ENCODE measurements at regions of chr17 and their contacts with region 1.

Region 1: GRCh38 chr17:29760761-29761696 is 138.3 kb upstream of the CORO6 start:
- DNase-seq: peak; percentile 86 to 95 (median 93)
- ATAC-seq: peak; percentile 94
- H3K4me3 ChIP-seq: peak overlapping the region; percentile 89
- H3K4me3 Mint-ChIP-seq: peak overlapping the region; percentile 90 to 100 (median 98)
- H3K27ac ChIP-seq: peak overlapping the region; percentile 82
- H3K27ac Mint-ChIP-seq: peak overlapping the region; percentile 90 to 98 (median 96)
- H3K4me1 ChIP-seq: peaks cover 25 to 29% of the 10 kb centered on the region in 2 donors
- H3K4me1 Mint-ChIP-seq: peaks cover 16 to 53% (median 37%) of the 10 kb centered on the region in 7 donors
- H3K27me3 ChIP-seq: no peaks in the 10 kb centered on the region
- H3K27me3 Mint-ChIP-seq: no peaks in the 10 kb centered on the region

Region 2: GRCh38 chr17:29568331-29569244 is 192.4 kb before region 1 on chr17 and contains the start of gene TP53I13:
- CTCF ChIA-PET with region 1: interaction called, 3 read pairs
- POLR2A ChIA-PET with region 1: no interaction called
- intact Hi-C with region 1: loop called (anchors 1 to 2 kb)
- DNase-seq: peak; percentile 65 to 90 (median 81)
- ATAC-seq: peak; percentile 81
- H3K4me3 ChIP-seq: peak within 1 kb of the TSS; percentile 89
- H3K4me3 Mint-ChIP-seq: peak within 1 kb of the TSS; percentile 88 to 99 (median 95)
- H3K27ac ChIP-seq: peak within 1 kb of the TSS; percentile 78
- H3K27ac Mint-ChIP-seq: peak within 1 kb of the TSS; percentile 82 to 97 (median 92)
- H3K4me1 ChIP-seq: peaks cover 12 to 30% of the 10 kb centered on the region in 2 donors
- H3K4me1 Mint-ChIP-seq: peaks cover 21 to 42% (median 32%) of the 10 kb centered on the region in 7 donors
- H3K27me3 ChIP-seq: no peaks in the 10 kb centered on the region
- H3K27me3 Mint-ChIP-seq: no peaks in the 10 kb centered on the region
- total RNA-seq, gene TP53I13: 61.6 to 87.5 (median 62.8) TPM

Region 3: GRCh38 chr17:29617125-29617480 is 143.9 kb before region 1 on chr17:
- CTCF ChIA-PET with region 1: interaction called, 10 read pairs
- POLR2A ChIA-PET with region 1: interaction called, 9 read pairs
- intact Hi-C with region 1: loop called (anchors 1 kb)
- DNase-seq: peak; percentile 77 to 91 (median 88)
- ATAC-seq: peak; percentile 80
- H3K4me3 ChIP-seq: peak overlapping the region; percentile 80
- H3K4me3 Mint-ChIP-seq: peak overlapping the region; percentile 78 to 93 (median 88)
- H3K27ac ChIP-seq: peak overlapping the region; percentile 38
- H3K27ac Mint-ChIP-seq: peak overlapping the region in 7 of 9 donors; percentile 2 to 91 (median 72)
- H3K4me1 ChIP-seq: peaks cover 36 to 42% of the 10 kb centered on the region in 2 donors
- H3K4me1 Mint-ChIP-seq: peaks cover 13 to 55% (median 38%) of the 10 kb centered on the region in 7 donors
- H3K27me3 ChIP-seq: no peaks in the 10 kb centered on the region
- H3K27me3 Mint-ChIP-seq: peaks cover 0 to 21% (median 0%) of the 10 kb centered on the region in 5 donors

Region 4: DNA sequence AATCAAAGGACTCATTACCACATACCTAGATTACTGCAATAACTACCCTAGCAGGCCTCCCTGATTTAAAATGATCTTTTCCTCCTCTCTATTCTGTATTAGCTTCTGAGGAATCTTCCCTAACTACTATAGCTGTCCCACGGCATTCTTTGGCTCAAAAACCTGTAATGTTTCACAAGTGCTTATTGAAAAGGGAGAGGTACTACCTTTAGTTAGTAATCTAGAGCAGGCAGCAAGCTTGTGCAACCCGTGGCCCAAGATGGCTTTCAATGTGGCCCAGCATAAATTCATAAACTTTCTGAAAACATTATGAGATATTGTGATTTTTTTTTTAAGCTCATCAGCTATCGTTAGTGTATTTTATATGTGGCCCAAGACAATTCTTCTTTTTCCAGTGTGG is 67.3 kb before region 1 on chr17:
- CTCF ChIA-PET with region 1: interaction called, 3 read pairs
- POLR2A ChIA-PET with region 1: interaction called, 13 read pairs
- intact Hi-C with region 1: no loop called
- DNase-seq: no peak
- ATAC-seq: no peak
- H3K4me3 ChIP-seq: no peak overlapping the region
- H3K4me3 Mint-ChIP-seq: no peak overlapping the region
- H3K27ac ChIP-seq: no peak overlapping the region
- H3K27ac Mint-ChIP-seq: peak overlapping the region in 7 of 9 donors; percentile 20 to 72 (median 57)
- H3K4me1 ChIP-seq: peaks cover 0 to 8% of the 10 kb centered on the region in 2 donors
- H3K4me1 Mint-ChIP-seq: peaks cover 13 to 58% (median 28%) of the 10 kb centered on the region in 7 donors
- H3K27me3 ChIP-seq: no peaks in the 10 kb centered on the region
- H3K27me3 Mint-ChIP-seq: no peaks in the 10 kb centered on the region

Region 5: GRCh38 chr17:29710891-29711418 is 50.1 kb before region 1 on chr17:
- CTCF ChIA-PET with region 1: no interaction called
- POLR2A ChIA-PET with region 1: interaction called, 57 read pairs
- intact Hi-C with region 1: loop called in 1 of 2 experiments (anchors 1 kb)
- DNase-seq: no peak
- ATAC-seq: no peak
- H3K4me3 ChIP-seq: no peak overlapping the region
- H3K4me3 Mint-ChIP-seq: peak overlapping the region in 1 of 10 donors; percentile 24
- H3K27ac ChIP-seq: no peak overlapping the region
- H3K27ac Mint-ChIP-seq: peak overlapping the region in 8 of 9 donors; percentile 69 to 96 (median 86)
- H3K4me1 ChIP-seq: peaks cover 29 to 30% of the 10 kb centered on the region in 2 donors
- H3K4me1 Mint-ChIP-seq: peaks cover 37 to 92% (median 75%) of the 10 kb centered on the region in 7 donors
- H3K27me3 ChIP-seq: no peaks in the 10 kb centered on the region
- H3K27me3 Mint-ChIP-seq: no peaks in the 10 kb centered on the region

Region 6: DNA sequence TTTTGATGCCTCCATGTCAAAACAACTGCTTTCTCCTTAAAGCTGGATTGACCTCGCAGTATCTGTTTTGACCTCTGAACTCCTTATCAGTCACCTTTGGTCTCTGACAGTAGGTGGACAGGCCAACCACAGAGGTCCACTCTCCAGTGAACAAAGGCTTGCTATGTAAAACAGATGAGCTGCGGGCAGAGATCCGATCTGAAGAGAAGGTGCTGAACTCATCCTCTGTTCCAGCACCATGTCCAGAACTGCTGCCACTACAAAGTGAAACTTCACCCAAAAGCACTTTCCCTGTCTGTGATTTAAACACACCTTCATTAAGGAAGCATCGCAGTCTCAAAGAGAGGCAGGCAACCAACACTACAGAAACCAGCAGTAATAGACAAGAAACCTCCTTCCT is 21.0 kb before region 1 on chr17:
- CTCF ChIA-PET with region 1: no interaction called
- POLR2A ChIA-PET with region 1: interaction called, 11 read pairs
- intact Hi-C with region 1: loop called (anchors 1 to 2 kb)
- DNase-seq: peak in 4 of 9 donors; percentile 18 to 28 (median 20)
- ATAC-seq: no peak
- H3K4me3 ChIP-seq: no peak overlapping the region
- H3K4me3 Mint-ChIP-seq: peak overlapping the region in 7 of 10 donors; percentile 8 to 68 (median 56)
- H3K27ac ChIP-seq: peak overlapping the region; percentile 33
- H3K27ac Mint-ChIP-seq: peak overlapping the region in 8 of 9 donors; percentile 55 to 91 (median 70)
- H3K4me1 ChIP-seq: peaks cover 12 to 34% of the 10 kb centered on the region in 2 donors
- H3K4me1 Mint-ChIP-seq: peaks cover 31 to 76% (median 58%) of the 10 kb centered on the region in 7 donors
- H3K27me3 ChIP-seq: no peaks in the 10 kb centered on the region
- H3K27me3 Mint-ChIP-seq: no peaks in the 10 kb centered on the region

Region 7: GRCh38 chr17:29777663-29778062 is 16.6 kb after region 1 on chr17:
- CTCF ChIA-PET with region 1: interaction called, 6 read pairs
- POLR2A ChIA-PET with region 1: interaction called, 9 read pairs
- intact Hi-C with region 1: loop called (anchors 1 kb)
- DNase-seq: no peak
- ATAC-seq: no peak
- H3K4me3 ChIP-seq: no peak overlapping the region
- H3K4me3 Mint-ChIP-seq: no peak overlapping the region
- H3K27ac ChIP-seq: no peak overlapping the region
- H3K27ac Mint-ChIP-seq: no peak overlapping the region
- H3K4me1 ChIP-seq: peaks cover 0 to 5% of the 10 kb centered on the region in 2 donors
- H3K4me1 Mint-ChIP-seq: peaks cover 0 to 9% (median 8%) of the 10 kb centered on the region in 7 donors
- H3K27me3 ChIP-seq: no peaks in the 10 kb centered on the region
- H3K27me3 Mint-ChIP-seq: no peaks in the 10 kb centered on the region

Measured in naive thymus-derived CD4-positive, alpha-beta T cell (primary cell).